ENCODE measurements at regions of chr12 and their contacts with region 1.

Region 1: GRCh38 chr12:27305673-27306456 is 26.8 kb upstream of the BMAL2 start:
- DNase-seq: peak; percentile 57
- ATAC-seq: no peak
- H3K4me3 ChIP-seq: no peak overlapping the region
- H3K4me3 Mint-ChIP-seq: no peak overlapping the region
- H3K27ac ChIP-seq: no peak overlapping the region
- H3K27ac Mint-ChIP-seq: no peak overlapping the region
- H3K4me1 ChIP-seq: no peaks in the 10 kb centered on the region
- H3K4me1 Mint-ChIP-seq: no peaks in the 10 kb centered on the region
- H3K27me3 ChIP-seq: no peaks in the 10 kb centered on the region
- H3K27me3 Mint-ChIP-seq: no peaks in the 10 kb centered on the region
- CTCF ChIP-seq: peak; percentile 84

Region 2: GRCh38 chr12:25970916-25971653 is 1334.8 kb before region 1 on chr12:
- CTCF ChIA-PET with region 1: no interaction called
- POLR2A ChIA-PET with region 1: no interaction called
- intact Hi-C with region 1: no loop called
- DNase-seq: no peak
- ATAC-seq: no peak
- H3K4me3 ChIP-seq: no peak overlapping the region
- H3K4me3 Mint-ChIP-seq: no peak overlapping the region
- H3K27ac ChIP-seq: no peak overlapping the region
- H3K27ac Mint-ChIP-seq: no peak overlapping the region
- H3K4me1 ChIP-seq: no peaks in the 10 kb centered on the region
- H3K4me1 Mint-ChIP-seq: no peaks in the 10 kb centered on the region
- H3K27me3 ChIP-seq: peaks cover 0 to 5% (median 2%) of the 10 kb centered on the region in 4 experiments
- H3K27me3 Mint-ChIP-seq: peaks cover 51% of the 10 kb centered on the region
- CTCF ChIP-seq: no peak

Region 3: DNA sequence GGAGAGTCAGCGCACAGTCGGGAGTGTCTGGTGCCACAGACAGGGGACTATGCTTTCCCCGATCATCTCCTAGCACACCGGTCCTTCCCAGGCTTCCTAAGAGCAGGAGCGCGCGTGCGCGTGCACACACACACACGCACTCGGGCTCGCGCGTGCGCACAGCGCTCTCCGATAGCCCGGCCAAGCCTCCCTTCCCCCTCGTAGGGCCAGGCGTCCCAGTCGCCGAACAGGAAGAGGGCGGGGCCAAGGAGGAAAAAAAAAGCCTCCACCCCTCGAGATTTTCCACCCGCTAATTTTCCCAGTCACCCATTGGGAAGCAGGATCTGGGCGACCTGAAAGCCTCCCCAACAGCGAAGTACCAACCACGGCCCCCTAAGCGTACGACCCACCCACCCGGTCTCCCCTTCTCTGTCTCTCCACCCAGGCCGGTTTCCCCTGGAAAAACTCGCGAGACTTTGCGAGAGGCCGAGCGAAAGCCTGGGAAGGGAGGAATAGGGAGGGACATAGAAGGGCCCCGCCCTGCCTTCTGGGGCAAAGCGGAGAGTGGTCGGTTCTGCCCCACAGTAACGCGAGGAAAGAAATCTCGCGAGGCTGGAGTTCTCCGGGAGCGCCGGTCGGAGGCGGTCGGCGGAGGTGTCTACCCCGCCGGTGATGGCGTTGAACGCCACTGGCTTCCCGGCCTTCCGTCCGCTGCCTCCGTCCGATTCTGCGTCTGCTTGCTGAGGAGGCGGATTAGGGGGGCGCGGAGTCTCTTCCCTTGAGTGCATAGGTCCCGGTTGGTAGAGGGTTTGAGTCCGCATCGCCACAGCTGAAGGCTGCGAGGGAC is 367.8 kb before region 1 on chr12 and contains the starts of genes FGFR1OP2 and INTS13:
- CTCF ChIA-PET with region 1: interaction called, 4 read pairs
- POLR2A ChIA-PET with region 1: interaction called, 14 read pairs
- intact Hi-C with region 1: no loop called
- DNase-seq: peak; percentile 97
- ATAC-seq: peak; percentile 91
- H3K4me3 ChIP-seq: peak within 1 kb of the TSS; percentile 72 to 100 (median 98)
- H3K4me3 Mint-ChIP-seq: peak within 1 kb of the TSS; percentile 99
- H3K27ac ChIP-seq: peak within 1 kb of the TSS; percentile 88 to 96
- H3K27ac Mint-ChIP-seq: peak within 1 kb of the TSS; percentile 99
- H3K4me1 ChIP-seq: peaks cover 18 to 57% of the 10 kb centered on the region in 2 donors
- H3K4me1 Mint-ChIP-seq: peaks cover 64% of the 10 kb centered on the region
- H3K27me3 ChIP-seq: no peaks in the 10 kb centered on the region
- H3K27me3 Mint-ChIP-seq: no peaks in the 10 kb centered on the region
- CTCF ChIP-seq: no peak
- total RNA-seq, gene FGFR1OP2: 64.3 and 67.3 TPM in 2 replicates
- total RNA-seq, gene INTS13: 15.6 and 16.2 TPM in 2 replicates

Region 4: GRCh38 chr12:27034607-27035293 is 271.1 kb before region 1 on chr12:
- CTCF ChIA-PET with region 1: interaction called, 55 read pairs
- POLR2A ChIA-PET with region 1: no interaction called
- intact Hi-C with region 1: loop called (anchors 1 kb)
- DNase-seq: no peak
- ATAC-seq: no peak
- H3K4me3 ChIP-seq: no peak overlapping the region
- H3K4me3 Mint-ChIP-seq: no peak overlapping the region
- H3K27ac ChIP-seq: no peak overlapping the region
- H3K27ac Mint-ChIP-seq: no peak overlapping the region
- H3K4me1 ChIP-seq: no peaks in the 10 kb centered on the region
- H3K4me1 Mint-ChIP-seq: no peaks in the 10 kb centered on the region
- H3K27me3 ChIP-seq: no peaks in the 10 kb centered on the region
- H3K27me3 Mint-ChIP-seq: no peaks in the 10 kb centered on the region
- CTCF ChIP-seq: no peak

Region 5: DNA sequence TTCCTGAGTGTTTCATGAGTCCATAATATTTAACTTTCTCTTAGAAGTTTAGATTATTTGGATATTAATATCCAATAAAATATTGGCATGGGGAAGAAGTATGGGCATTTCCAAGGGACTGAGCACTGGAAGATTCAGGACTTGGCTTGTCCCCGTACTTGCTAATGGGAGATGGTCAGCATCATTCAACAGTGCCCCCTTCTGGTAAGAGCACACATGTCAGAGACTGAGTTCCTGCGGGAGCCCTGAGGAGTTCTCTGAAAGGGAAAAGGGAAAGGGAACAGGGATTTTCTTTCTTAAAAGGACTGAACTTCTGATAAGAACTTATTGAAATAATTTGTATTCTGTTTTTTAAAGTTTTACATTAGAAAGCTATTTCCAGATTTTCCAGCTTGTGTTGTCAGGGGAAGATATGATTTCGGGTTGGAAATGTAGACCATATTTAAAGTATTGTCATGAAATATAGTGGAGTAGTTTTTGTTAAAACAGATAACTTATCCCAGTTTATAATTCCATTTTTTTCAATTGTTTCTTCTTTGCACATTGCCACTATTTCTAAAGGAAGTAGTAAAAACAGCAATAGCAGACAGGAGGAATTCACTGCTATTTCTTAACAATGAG is 163.7 kb before region 1 on chr12:
- CTCF ChIA-PET with region 1: interaction called, 8 read pairs
- POLR2A ChIA-PET with region 1: no interaction called
- intact Hi-C with region 1: loop called (anchors 2 kb)
- DNase-seq: peak; percentile 66
- ATAC-seq: peak; percentile 63
- H3K4me3 ChIP-seq: no peak overlapping the region
- H3K4me3 Mint-ChIP-seq: no peak overlapping the region
- H3K27ac ChIP-seq: no peak overlapping the region
- H3K27ac Mint-ChIP-seq: no peak overlapping the region
- H3K4me1 ChIP-seq: no peaks in the 10 kb centered on the region
- H3K4me1 Mint-ChIP-seq: peaks cover 8% of the 10 kb centered on the region
- H3K27me3 ChIP-seq: no peaks in the 10 kb centered on the region
- H3K27me3 Mint-ChIP-seq: no peaks in the 10 kb centered on the region
- CTCF ChIP-seq: peak; percentile 83

Region 6: GRCh38 chr12:27243804-27244683 is 61.8 kb before region 1 on chr12 and contains the start of gene STK38L:
- CTCF ChIA-PET with region 1: interaction called, 24 read pairs
- POLR2A ChIA-PET with region 1: no interaction called
- intact Hi-C with region 1: no loop called
- DNase-seq: peak; percentile 97
- ATAC-seq: peak; percentile 97
- H3K4me3 ChIP-seq: peak within 1 kb of the TSS; percentile 48 to 97 (median 88)
- H3K4me3 Mint-ChIP-seq: peak within 1 kb of the TSS; percentile 98
- H3K27ac ChIP-seq: peak within 1 kb of the TSS; percentile 66 to 89
- H3K27ac Mint-ChIP-seq: peak within 1 kb of the TSS; percentile 95
- H3K4me1 ChIP-seq: peaks cover 17 to 20% of the 10 kb centered on the region in 2 donors
- H3K4me1 Mint-ChIP-seq: peaks cover 38% of the 10 kb centered on the region
- H3K27me3 ChIP-seq: no peaks in the 10 kb centered on the region
- H3K27me3 Mint-ChIP-seq: no peaks in the 10 kb centered on the region
- CTCF ChIP-seq: no peak
- total RNA-seq, gene STK38L: 19.9 and 21.2 TPM in 2 replicates

Measured in B cell (primary cell).